ENCODE measurements at regions of chr5 and their contacts with region 1.

Region 1: GRCh38 chr5:109865637-109866036 is 175.9 kb downstream of the MAN2A1 start:
- DNase-seq: peak; percentile 16
- ATAC-seq: peak; percentile 55
- H3K4me3 Mint-ChIP-seq: no peak overlapping the region
- H3K27ac Mint-ChIP-seq: peak overlapping the region; percentile 33
- H3K4me1 Mint-ChIP-seq: peaks cover 54% of the 10 kb centered on the region
- H3K27me3 Mint-ChIP-seq: no peaks in the 10 kb centered on the region

Region 2: DNA sequence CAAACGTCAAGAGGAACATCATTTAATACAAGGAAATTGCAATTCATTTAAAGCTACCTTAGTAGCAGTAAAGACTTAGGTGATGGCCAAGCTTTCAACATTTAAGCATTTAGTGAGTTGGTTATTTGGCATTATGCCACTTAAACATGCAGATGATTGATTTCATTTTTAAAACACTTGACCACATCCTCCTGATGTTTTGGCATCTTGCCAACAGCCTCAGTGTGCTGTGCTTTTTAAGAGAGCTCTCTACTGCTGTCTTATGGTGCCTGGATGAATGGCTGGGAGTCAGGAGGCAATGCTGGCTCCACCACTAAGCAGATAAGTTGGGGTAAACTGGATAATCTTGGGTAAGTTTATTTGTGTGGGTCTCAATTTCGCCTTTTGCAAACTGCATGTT is 188.6 kb after region 1 on chr5:
- CTCF ChIA-PET with region 1: no interaction called
- POLR2A ChIA-PET with region 1: no interaction called
- intact Hi-C with region 1: loop called in 1 of 2 experiments (anchors 10 kb)
- DNase-seq: peak; percentile 84
- ATAC-seq: peak; percentile 94
- H3K4me3 Mint-ChIP-seq: no peak overlapping the region
- H3K27ac Mint-ChIP-seq: peak overlapping the region; percentile 76
- H3K4me1 Mint-ChIP-seq: peaks cover 28% of the 10 kb centered on the region
- H3K27me3 Mint-ChIP-seq: no peaks in the 10 kb centered on the region